ENCODE measurements at regions of chr5 and their contacts with region 1.

Region 1: GRCh38 chr5:58460732-58461286 is 923 bp upstream of the PLK2 start:
- DNase-seq: peak; percentile 95
- H3K4me3 ChIP-seq: peak overlapping the region; percentile 56 to 90 (median 82)
- H3K27ac ChIP-seq: peak overlapping the region; percentile 93 to 97 (median 96)
- H3K4me1 ChIP-seq: peaks cover 0 to 25% (median 9%) of the 10 kb centered on the region in 4 donors
- H3K27me3 ChIP-seq: no peaks in the 10 kb centered on the region
- CTCF ChIP-seq: peak; percentile 56 to 81 (median 68)
- EP300 ChIP-seq: no peak
- POLR2A ChIP-seq: no peak

Region 2: GRCh38 chr5:57298295-57298984 is 1162.4 kb before region 1 on chr5:
- in situ Hi-C with region 1: loop called (anchors 10 kb)
- intact Hi-C with region 1: loop called (anchors 1 kb)
- DNase-seq: peak; percentile 94
- H3K4me3 ChIP-seq: no peak overlapping the region
- H3K27ac ChIP-seq: peak overlapping the region; percentile 27 to 65 (median 52)
- H3K4me1 ChIP-seq: peaks cover 4 to 10% (median 8%) of the 10 kb centered on the region in 4 donors
- H3K27me3 ChIP-seq: no peaks in the 10 kb centered on the region
- CTCF ChIP-seq: peak; percentile 71 to 80 (median 76)
- EP300 ChIP-seq: no peak
- POLR2A ChIP-seq: no peak

Region 3: GRCh38 chr5:57650360-57651069 is 810.3 kb before region 1 on chr5:
- in situ Hi-C with region 1: loop called in 1 of 4 experiments (anchors 25 kb)
- intact Hi-C with region 1: no loop called
- DNase-seq: peak; percentile 19
- H3K4me3 ChIP-seq: no peak overlapping the region
- H3K27ac ChIP-seq: no peak overlapping the region
- H3K4me1 ChIP-seq: no peaks in the 10 kb centered on the region
- H3K27me3 ChIP-seq: no peaks in the 10 kb centered on the region
- CTCF ChIP-seq: peak; percentile 52 to 62 (median 55)
- EP300 ChIP-seq: no peak
- POLR2A ChIP-seq: no peak

Region 4: GRCh38 chr5:57878301-57878722 is 582.5 kb before region 1 on chr5:
- in situ Hi-C with region 1: loop called in 3 of 4 experiments (anchors 10 to 25 kb)
- intact Hi-C with region 1: no loop called
- DNase-seq: no peak
- H3K4me3 ChIP-seq: no peak overlapping the region
- H3K27ac ChIP-seq: no peak overlapping the region
- H3K4me1 ChIP-seq: no peaks in the 10 kb centered on the region
- H3K27me3 ChIP-seq: no peaks in the 10 kb centered on the region
- CTCF ChIP-seq: no peak
- EP300 ChIP-seq: no peak
- POLR2A ChIP-seq: no peak

Region 5: DNA sequence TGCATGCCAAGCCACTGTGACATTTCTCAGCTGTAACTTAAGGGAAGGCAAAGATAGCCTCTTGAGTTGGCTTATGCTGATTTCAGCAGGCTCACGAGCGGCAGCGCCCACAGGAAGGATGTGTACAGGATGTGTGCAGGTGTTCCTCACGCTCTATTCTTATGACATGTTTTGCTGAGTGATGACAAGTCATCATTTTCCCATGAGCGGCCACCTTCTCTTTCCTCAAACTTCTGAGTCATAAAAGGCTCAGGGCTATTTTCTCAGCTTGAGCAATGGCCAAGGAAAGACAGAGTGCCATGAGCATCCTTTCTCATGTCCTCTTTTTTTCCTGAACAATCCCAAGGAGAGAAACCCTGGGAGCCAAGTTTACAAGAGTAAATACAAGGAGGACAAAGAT is 366.8 kb before region 1 on chr5:
- in situ Hi-C with region 1: no loop called
- intact Hi-C with region 1: no loop called
- DNase-seq: no peak
- H3K4me3 ChIP-seq: no peak overlapping the region
- H3K27ac ChIP-seq: no peak overlapping the region
- H3K4me1 ChIP-seq: no peaks in the 10 kb centered on the region
- H3K27me3 ChIP-seq: no peaks in the 10 kb centered on the region
- CTCF ChIP-seq: no peak
- EP300 ChIP-seq: no peak
- POLR2A ChIP-seq: no peak